Dendritic cell treated with granulocyte-macrophage colony-stimulating factor and Interleukin-4, amounts not matched to agents 40 ng/mL and 50 ng/mL, for 4 days (primary cell): ENCODE measurements at regions of chr11 and their contacts with region 1.

Region 1: DNA sequence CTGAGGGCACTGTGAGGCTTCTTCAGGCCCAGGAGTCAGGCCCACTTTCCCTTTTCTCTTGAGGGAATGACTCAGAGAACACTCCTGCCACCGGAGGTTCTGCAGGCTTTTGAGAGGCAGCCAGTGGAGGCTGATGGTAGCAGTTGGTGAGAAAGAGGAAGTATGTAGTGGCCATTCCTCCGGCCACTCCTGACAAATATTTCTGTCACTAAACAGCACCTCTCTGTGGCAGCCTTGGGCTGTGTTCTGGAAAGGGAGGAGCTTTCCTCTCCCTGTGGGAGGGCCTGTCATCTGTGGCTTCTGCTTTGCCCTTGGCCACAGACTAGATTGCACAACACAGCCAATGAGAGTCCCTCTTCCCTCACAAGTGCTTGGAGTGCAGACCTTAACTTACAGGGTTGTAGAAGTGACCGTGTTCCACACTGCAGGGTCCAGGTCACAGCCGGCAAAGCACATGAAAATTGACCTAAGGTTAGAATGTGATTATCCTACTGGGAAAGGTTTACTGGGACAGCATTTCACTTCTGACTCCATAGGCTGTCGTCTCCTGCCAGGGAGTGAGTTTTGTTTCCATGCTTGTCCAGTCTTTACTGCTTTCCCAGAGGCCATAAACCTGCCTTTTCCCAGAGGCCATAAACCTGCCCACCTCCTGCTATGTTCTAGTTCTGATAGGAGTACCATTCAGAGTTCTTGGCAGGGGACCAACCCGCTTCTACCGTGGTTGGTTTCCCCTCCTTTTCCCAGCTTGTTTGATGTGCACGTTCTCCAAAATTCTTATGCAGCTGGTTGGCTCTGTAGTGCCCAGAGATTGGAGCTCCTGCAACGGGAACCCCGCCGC is 33.3 kb downstream of the MARK2 start:
- H3K4me3 Mint-ChIP-seq: peak overlapping the region; percentile 48
- H3K27ac Mint-ChIP-seq: peak overlapping the region; percentile 82
- H3K4me1 Mint-ChIP-seq: peaks cover 82% of the 10 kb centered on the region
- H3K27me3 Mint-ChIP-seq: no peaks in the 10 kb centered on the region

Region 2: GRCh38 chr11:63945477-63946163 is 73.4 kb after region 1 on chr11:
- intact Hi-C with region 1: loop called (anchors 10 kb)
- H3K4me3 Mint-ChIP-seq: no peak overlapping the region
- H3K27ac Mint-ChIP-seq: no peak overlapping the region
- H3K4me1 Mint-ChIP-seq: peaks cover 34% of the 10 kb centered on the region
- H3K27me3 Mint-ChIP-seq: no peaks in the 10 kb centered on the region